Activated B cell treated with CpG ODN at 0.5 μM for 24 hours (primary cell): ENCODE measurements at regions of chr10 and their contacts with region 1.

Region 1: GRCh38 chr10:35236739-35237138 is 99.6 kb upstream of the CCNY start:
- DNase-seq: no peak
- ATAC-seq: no peak
- H3K4me3 Mint-ChIP-seq: no peak overlapping the region
- H3K27ac Mint-ChIP-seq: no peak overlapping the region
- H3K4me1 Mint-ChIP-seq: no peaks in the 10 kb centered on the region
- H3K27me3 Mint-ChIP-seq: no peaks in the 10 kb centered on the region
- CTCF ChIP-seq: no peak

Region 2: DNA sequence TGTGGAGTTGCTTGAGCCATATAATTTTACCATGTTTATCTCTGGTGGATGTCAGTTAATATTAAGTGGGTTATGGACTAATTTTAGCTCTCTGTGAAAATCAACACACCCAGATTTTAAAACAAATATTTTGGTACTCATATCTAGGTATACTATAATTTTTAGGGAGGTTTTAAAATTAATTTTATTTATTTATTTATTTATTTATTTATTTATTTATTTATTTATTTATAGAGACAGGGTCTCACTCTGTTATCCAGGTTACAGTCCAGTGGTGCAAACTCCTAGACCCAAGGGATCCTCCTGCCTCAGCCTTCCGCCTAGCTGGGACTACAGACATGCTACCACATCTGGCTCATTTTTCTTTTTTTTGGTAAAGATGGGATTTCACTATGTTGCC is 117.4 kb before region 1 on chr10:
- CTCF ChIA-PET with region 1: interaction called, 10 read pairs
- POLR2A ChIA-PET with region 1: no interaction called
- intact Hi-C with region 1: no loop called
- DNase-seq: no peak
- ATAC-seq: no peak
- H3K4me3 Mint-ChIP-seq: no peak overlapping the region
- H3K27ac Mint-ChIP-seq: no peak overlapping the region
- H3K4me1 Mint-ChIP-seq: peaks cover 5% of the 10 kb centered on the region
- H3K27me3 Mint-ChIP-seq: no peaks in the 10 kb centered on the region
- CTCF ChIP-seq: no peak

Region 3: GRCh38 chr10:35271086-35271858 is 34.5 kb after region 1 on chr10:
- CTCF ChIA-PET with region 1: no interaction called
- POLR2A ChIA-PET with region 1: no interaction called
- intact Hi-C with region 1: no loop called
- DNase-seq: no peak
- ATAC-seq: no peak
- H3K4me3 Mint-ChIP-seq: no peak overlapping the region
- H3K27ac Mint-ChIP-seq: no peak overlapping the region
- H3K4me1 Mint-ChIP-seq: peaks cover 7% of the 10 kb centered on the region
- H3K27me3 Mint-ChIP-seq: peaks cover 5% of the 10 kb centered on the region
- CTCF ChIP-seq: no peak

Region 4: GRCh38 chr10:36779234-36779846 is 1542.6 kb after region 1 on chr10:
- CTCF ChIA-PET with region 1: no interaction called
- POLR2A ChIA-PET with region 1: no interaction called
- intact Hi-C with region 1: loop called (anchors 2 kb)
- DNase-seq: no peak
- ATAC-seq: no peak
- H3K4me3 Mint-ChIP-seq: no peak overlapping the region
- H3K27ac Mint-ChIP-seq: no peak overlapping the region
- H3K4me1 Mint-ChIP-seq: no peaks in the 10 kb centered on the region
- H3K27me3 Mint-ChIP-seq: peaks cover 1% of the 10 kb centered on the region
- CTCF ChIP-seq: no peak